ENCODE measurements at regions of chr3 and their contacts with region 1.

Region 1: GRCh38 chr3:15205934-15206661 is at the start of gene CAPN7:
- DNase-seq: peak; percentile 99
- ATAC-seq: peak; percentile 99
- total RNA-seq, gene CAPN7: 28.2 TPM

Region 2: GRCh38 chr3:15098503-15099363 is 107.4 kb before region 1 on chr3 and contains the start of gene RBSN:
- intact Hi-C with region 1: loop called (anchors 5 kb)
- DNase-seq: peak; percentile 98
- ATAC-seq: peak; percentile 78
- total RNA-seq, gene RBSN: 16.5 TPM

Region 3: GRCh38 chr3:15217841-15218267 is 11.8 kb after region 1 on chr3:
- intact Hi-C with region 1: loop called (anchors 1 kb)
- DNase-seq: no peak
- ATAC-seq: peak; percentile 73

Region 4: GRCh38 chr3:15405448-15406050 is 199.5 kb after region 1 on chr3:
- intact Hi-C with region 1: loop called (anchors 1 kb)
- DNase-seq: no peak
- ATAC-seq: peak; percentile 65

Region 5: DNA sequence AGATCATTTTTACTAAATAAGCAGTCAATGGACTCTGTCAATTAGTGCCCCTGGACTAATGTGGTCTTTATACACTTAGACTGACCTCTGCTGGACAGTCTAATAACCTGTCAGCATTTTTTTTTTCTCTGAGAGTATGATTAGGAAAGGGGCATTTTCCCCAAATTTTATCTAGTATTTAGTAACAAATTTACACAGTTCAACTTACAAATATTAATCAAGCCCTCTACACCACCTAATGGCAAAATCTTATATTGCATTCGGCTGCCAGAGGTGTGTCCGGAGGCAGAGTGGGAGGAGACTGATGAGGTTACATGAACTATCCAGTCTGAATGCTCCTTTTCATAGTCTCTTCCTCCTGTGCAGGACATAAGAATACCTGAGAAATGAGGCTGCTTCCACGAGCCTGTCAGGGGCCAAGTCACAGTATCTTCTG is 351.4 kb after region 1 on chr3:
- intact Hi-C with region 1: loop called (anchors 2 kb)
- DNase-seq: no peak
- ATAC-seq: peak; percentile 65

Measured in Right ventricle myocardium inferior (tissue), 1 donor.